ENCODE measurements at regions of chr17 and their contacts with region 1.

Region 1: DNA sequence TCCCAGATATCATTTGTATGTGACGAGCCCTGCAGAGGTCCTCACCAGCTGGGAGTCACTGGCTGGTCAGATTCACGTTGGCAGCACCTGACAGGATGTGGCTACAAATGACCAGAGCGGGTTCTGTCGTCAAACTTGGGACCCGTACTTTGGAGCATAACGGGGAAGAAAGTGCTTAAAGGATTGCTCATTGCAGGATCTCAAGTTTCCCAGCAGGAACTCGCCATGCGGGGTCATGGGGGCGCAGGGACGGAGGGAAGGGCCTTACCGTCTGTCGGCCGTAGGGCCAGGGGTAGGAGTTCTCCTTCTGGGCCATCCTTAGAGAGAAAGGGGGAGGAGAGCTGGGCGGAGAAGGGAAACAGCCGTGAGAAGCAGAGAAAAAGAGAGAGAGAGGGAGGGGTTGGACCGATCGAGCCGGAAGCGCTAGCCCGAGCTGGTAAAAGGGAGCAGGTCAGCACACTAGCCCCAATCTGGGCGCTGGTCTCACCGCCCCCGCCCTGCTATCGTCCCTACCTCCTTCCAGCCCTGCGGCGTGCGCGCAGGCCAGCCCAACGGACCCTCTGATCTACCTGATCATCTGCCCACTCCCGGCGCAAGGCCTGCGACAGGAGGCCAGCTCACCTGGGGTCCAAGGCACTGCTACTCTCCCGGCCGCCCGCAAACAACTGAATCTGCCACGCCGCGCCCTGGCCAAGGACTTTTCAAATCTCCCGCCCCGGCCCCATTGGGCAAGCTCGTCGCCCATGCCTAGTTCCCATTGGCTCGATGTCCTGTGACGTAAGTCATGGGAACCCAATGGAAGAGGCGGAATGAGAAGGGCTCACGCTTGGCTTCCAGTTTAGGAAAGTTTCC is at the start of gene AURKB:
- DNase-seq: peak; percentile 92

Region 2: DNA sequence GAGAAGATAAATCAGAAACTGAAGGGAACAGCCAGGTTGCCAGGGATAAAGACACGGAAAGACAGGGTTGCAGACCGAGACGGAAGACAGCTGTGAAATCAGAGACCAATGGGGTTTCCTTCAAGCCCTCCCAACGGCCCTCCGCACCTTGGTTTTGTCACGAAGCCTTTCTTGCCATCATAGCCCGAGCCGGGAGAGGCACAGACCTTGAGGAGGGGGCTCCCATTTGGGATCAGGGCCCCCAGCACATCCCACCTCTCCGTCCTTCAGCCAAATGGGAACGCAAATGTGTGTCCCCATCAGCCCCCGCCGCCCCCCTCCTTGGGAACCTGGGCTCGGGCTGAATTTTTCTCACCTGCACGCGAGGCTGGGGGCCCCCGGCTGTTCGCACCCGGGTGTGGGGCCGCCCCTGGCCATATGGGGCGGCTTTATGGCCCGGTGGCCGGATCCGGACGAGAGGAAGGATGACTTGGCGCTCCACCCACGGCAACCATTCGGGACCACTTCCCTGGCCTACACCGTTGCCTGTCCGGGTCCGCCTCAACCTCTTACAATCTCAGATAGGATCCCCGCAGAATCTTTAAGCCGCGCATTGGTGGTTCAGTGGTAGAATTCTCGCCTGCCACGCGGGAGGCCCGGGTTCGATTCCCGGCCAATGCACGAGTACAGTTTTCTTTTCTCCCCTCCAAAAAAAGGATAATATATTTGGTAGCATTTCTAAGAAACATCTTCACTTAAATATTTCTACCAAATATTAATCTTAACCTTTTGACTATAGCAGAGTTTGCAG is 84.8 kb before region 1 on chr17:
- CTCF ChIA-PET with region 1: interaction called, 3 read pairs
- POLR2A ChIA-PET with region 1: interaction called, 15 read pairs
- DNase-seq: peak; percentile 73

Region 3: DNA sequence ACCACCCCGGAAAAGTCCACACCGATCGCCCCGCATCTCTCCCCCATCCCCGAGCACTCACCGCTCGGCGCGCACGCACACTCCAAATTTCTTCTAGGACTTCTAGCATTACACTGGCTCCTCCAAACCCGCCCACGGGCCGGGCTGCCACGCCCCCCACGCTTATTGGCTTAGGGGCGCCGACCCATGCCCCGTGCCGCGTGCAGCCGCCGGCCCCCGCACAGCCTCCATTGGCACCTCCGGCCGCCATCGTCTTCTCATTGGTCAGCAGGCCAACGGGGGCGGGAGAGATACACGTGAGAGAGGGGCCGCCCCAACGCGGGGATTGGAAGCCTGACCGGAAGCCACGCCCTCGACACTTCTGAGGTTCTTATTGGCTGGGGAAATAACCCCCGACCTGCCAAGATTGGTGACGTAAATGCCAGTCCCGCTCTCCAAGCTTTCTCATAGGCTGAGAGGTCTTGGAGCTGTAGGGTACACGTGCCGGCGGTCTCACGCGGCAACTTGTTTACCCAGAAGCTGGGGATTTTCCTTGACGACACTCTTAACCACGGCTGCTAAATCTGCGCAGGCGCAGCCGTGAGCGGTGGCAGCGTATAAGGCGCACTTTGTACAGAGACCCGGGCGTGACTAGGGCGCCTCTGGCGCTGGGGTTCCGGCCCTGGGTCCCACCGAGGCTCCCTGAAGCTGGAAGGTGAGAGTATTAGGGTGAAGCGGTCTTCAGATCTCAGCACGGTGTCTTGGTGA is 53.7 kb before region 1 on chr17:
- CTCF ChIA-PET with region 1: no interaction called
- POLR2A ChIA-PET with region 1: interaction called, 14 read pairs
- DNase-seq: peak; percentile 90

Region 4: DNA sequence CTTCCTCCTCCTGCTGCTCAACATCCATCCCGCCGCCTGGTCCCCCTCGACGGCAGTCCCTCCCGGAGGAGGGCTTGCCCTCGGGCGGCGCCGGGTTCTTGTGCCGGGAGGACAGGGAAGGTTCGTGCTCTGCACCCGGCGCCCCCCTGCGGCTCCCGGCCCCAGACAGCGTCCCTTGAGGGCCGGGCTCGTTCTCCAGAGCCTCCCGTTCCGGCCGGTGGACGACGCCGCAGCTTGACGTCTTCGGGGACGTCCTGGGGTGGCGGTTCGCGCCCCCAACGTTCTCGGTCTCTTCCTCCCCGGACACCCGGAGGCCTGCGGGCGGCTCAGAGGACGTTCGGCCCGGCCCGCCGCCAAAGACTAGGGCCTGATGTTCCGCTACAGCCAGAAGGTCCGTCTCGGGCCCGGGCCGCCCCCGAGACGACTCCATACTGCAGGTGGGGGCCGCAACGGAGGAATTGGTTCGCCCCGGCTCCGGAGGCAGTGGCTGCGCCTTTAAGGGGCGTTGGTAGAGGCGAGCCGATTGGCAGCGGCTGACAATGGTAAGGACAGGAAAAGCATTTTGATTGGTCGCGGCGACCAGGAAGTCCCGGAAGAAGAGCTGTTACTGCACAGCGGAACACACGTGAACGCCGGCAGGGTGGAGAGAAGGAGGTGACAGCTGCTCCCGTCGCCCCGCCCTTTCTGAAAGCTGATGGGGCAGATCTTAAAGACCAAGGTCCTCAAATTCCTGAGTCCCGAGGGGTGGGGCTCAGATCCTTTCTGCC is 20.2 kb before region 1 on chr17 and contains the start of gene BORCS6:
- CTCF ChIA-PET with region 1: interaction called, 6 read pairs
- POLR2A ChIA-PET with region 1: interaction called, 87 read pairs
- DNase-seq: peak; percentile 81

Region 5: GRCh38 chr17:8294814-8295316 is 84.7 kb after region 1 on chr17:
- CTCF ChIA-PET with region 1: interaction called, 6 read pairs
- POLR2A ChIA-PET with region 1: interaction called, 17 read pairs
- DNase-seq: no peak